Heart left ventricle (tissue), 16 donors: ENCODE measurements at regions of chr1 and their contacts with region 1.

Region 1: GRCh38 chr1:183655562-183656075 is 2.5 kb upstream of the APOBEC4 start:
- DNase-seq: peak; percentile 71 to 81 (median 77)
- ATAC-seq: peak; percentile 52 to 79 (median 74)
- H3K4me3 ChIP-seq: no peak overlapping the region
- H3K27ac ChIP-seq: peak overlapping the region in 1 of 12 donors; percentile 53
- H3K4me1 ChIP-seq: peaks cover 5 to 53% (median 37%) of the 10 kb centered on the region in 12 donors
- H3K27me3 ChIP-seq: no peaks in the 10 kb centered on the region
- CTCF ChIP-seq: peak; percentile 85 to 96 (median 90)
- POLR2A ChIP-seq: no peak

Region 2: GRCh38 chr1:183571678-183572268 is 83.8 kb before region 1 on chr1:
- intact Hi-C with region 1: no loop called
- DNase-seq: no peak
- ATAC-seq: no peak
- H3K4me3 ChIP-seq: no peak overlapping the region
- H3K27ac ChIP-seq: no peak overlapping the region
- H3K4me1 ChIP-seq: peaks cover 0 to 37% (median 9%) of the 10 kb centered on the region in 12 donors
- H3K27me3 ChIP-seq: no peaks in the 10 kb centered on the region
- CTCF ChIP-seq: no peak
- POLR2A ChIP-seq: no peak

Region 3: DNA sequence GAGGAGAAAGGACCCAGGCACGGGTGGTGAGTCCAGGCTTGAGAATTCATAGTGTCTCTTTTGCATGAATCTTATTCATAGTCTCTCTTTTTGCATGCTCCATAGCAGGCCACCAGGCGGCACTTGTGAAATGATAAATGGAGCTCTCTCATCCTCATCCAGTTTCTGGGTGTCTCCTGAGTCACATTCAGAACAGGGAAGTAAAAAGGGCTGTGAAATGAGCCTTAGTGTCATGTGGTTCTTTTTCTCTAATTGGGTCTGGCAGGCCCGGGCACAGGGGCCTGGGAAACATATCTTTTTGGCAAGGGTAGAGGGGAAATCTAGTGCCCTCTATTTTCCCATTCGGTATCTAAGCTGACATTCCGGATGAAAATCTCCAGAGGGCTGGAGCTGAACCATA is 46.3 kb before region 1 on chr1:
- intact Hi-C with region 1: no loop called
- DNase-seq: peak; percentile 58 to 76 (median 67)
- ATAC-seq: peak; percentile 72 to 91 (median 89)
- H3K4me3 ChIP-seq: peak overlapping the region in 2 of 12 donors; percentile 5 to 11
- H3K27ac ChIP-seq: peak overlapping the region in 11 of 12 donors; percentile 55 to 78 (median 60)
- H3K4me1 ChIP-seq: peaks cover 0 to 57% (median 21%) of the 10 kb centered on the region in 12 donors
- H3K27me3 ChIP-seq: no peaks in the 10 kb centered on the region
- CTCF ChIP-seq: peak; percentile 22 to 70 (median 57)
- POLR2A ChIP-seq: no peak

Region 4: GRCh38 chr1:183711741-183712361 is 56.2 kb after region 1 on chr1:
- intact Hi-C with region 1: no loop called
- DNase-seq: peak in 4 of 5 donors; percentile 43 to 66 (median 55)
- ATAC-seq: peak; percentile 82 to 91 (median 88)
- H3K4me3 ChIP-seq: no peak overlapping the region
- H3K27ac ChIP-seq: peak overlapping the region in 11 of 12 donors; percentile 33 to 72 (median 49)
- H3K4me1 ChIP-seq: peaks cover 0 to 52% (median 27%) of the 10 kb centered on the region in 12 donors
- H3K27me3 ChIP-seq: no peaks in the 10 kb centered on the region
- CTCF ChIP-seq: peak in 4 of 12 donors; percentile 18 to 27 (median 24)
- POLR2A ChIP-seq: no peak

Region 5: GRCh38 chr1:183783767-183784637 is 128.4 kb after region 1 on chr1:
- intact Hi-C with region 1: loop called in 1 of 10 experiments (anchors 10 kb)
- DNase-seq: peak; percentile 72 to 86 (median 82)
- ATAC-seq: peak; percentile 68 to 90 (median 86)
- H3K4me3 ChIP-seq: no peak overlapping the region
- H3K27ac ChIP-seq: peak overlapping the region in 11 of 12 donors; percentile 12 to 42 (median 25)
- H3K4me1 ChIP-seq: peaks cover 5 to 43% (median 24%) of the 10 kb centered on the region in 12 donors
- H3K27me3 ChIP-seq: no peaks in the 10 kb centered on the region
- CTCF ChIP-seq: no peak
- POLR2A ChIP-seq: no peak

Region 6: GRCh38 chr1:183915625-183916510 is 260.2 kb after region 1 on chr1:
- intact Hi-C with region 1: loop called (anchors 1 to 2 kb)
- DNase-seq: peak in 4 of 5 donors; percentile 76 to 81 (median 78)
- ATAC-seq: peak; percentile 22 to 85 (median 84)
- H3K4me3 ChIP-seq: no peak overlapping the region
- H3K27ac ChIP-seq: peak overlapping the region in 7 of 12 donors; percentile 31 to 70 (median 44)
- H3K4me1 ChIP-seq: peaks cover 0 to 50% (median 18%) of the 10 kb centered on the region in 12 donors
- H3K27me3 ChIP-seq: no peaks in the 10 kb centered on the region
- CTCF ChIP-seq: peak; percentile 73 to 93 (median 86)
- POLR2A ChIP-seq: no peak